ENCODE measurements at regions of chr21 and their contacts with region 1.

Region 1: GRCh38 chr21:15483138-15483780 is 246.5 kb upstream of the USP25 start:
- DNase-seq: peak; percentile 89
- H3K4me3 ChIP-seq: no peak overlapping the region
- H3K27ac ChIP-seq: no peak overlapping the region
- H3K4me1 ChIP-seq: no peaks in the 10 kb centered on the region
- H3K27me3 ChIP-seq: no peaks in the 10 kb centered on the region
- CTCF ChIP-seq: peak; percentile 88

Region 2: GRCh38 chr21:14414932-14415508 is 1068.2 kb before region 1 on chr21:
- intact Hi-C with region 1: loop called (anchors 10 kb)
- DNase-seq: no peak
- H3K4me3 ChIP-seq: no peak overlapping the region
- H3K27ac ChIP-seq: no peak overlapping the region
- H3K4me1 ChIP-seq: no peaks in the 10 kb centered on the region
- H3K27me3 ChIP-seq: no peaks in the 10 kb centered on the region
- CTCF ChIP-seq: no peak

Region 3: GRCh38 chr21:14864211-14865021 is 618.8 kb before region 1 on chr21:
- intact Hi-C with region 1: loop called (anchors 2 kb)
- DNase-seq: peak; percentile 79
- H3K4me3 ChIP-seq: no peak overlapping the region
- H3K27ac ChIP-seq: no peak overlapping the region
- H3K4me1 ChIP-seq: no peaks in the 10 kb centered on the region
- H3K27me3 ChIP-seq: no peaks in the 10 kb centered on the region
- CTCF ChIP-seq: peak; percentile 57

Region 4: GRCh38 chr21:15064576-15065391 is 418.5 kb before region 1 on chr21 and contains the start of gene NRIP1:
- intact Hi-C with region 1: loop called (anchors 10 kb)
- DNase-seq: peak; percentile 90
- H3K4me3 ChIP-seq: peak within 1 kb of the TSS; percentile 81
- H3K27ac ChIP-seq: peak within 1 kb of the TSS; percentile 97
- H3K4me1 ChIP-seq: peaks cover 4% of the 10 kb centered on the region
- H3K27me3 ChIP-seq: no peaks in the 10 kb centered on the region
- CTCF ChIP-seq: no peak
- total RNA-seq, gene NRIP1: 49.5 to 89.3 TPM

Region 5: DNA sequence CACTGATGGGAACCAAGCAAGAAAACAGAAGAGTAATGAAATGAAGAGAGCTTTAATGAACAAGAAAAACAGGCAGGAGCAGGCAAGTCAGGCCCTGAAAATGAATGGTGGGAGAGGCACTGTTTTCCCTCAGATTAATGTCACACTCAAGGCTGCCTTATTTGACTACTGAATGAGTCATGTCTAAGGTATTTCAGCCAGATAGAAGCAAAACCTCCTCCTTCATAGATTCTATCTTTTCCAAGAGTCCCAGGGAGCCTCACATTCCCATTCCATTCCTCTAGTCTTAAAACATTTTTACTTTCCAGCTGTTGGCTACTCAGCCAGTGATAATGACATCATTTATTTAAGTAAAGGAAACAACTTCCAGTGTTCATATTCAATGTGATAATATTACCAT is 190.0 kb before region 1 on chr21:
- intact Hi-C with region 1: loop called (anchors 5 kb)
- DNase-seq: no peak
- H3K4me3 ChIP-seq: no peak overlapping the region
- H3K27ac ChIP-seq: no peak overlapping the region
- H3K4me1 ChIP-seq: no peaks in the 10 kb centered on the region
- H3K27me3 ChIP-seq: no peaks in the 10 kb centered on the region
- CTCF ChIP-seq: no peak

Region 6: DNA sequence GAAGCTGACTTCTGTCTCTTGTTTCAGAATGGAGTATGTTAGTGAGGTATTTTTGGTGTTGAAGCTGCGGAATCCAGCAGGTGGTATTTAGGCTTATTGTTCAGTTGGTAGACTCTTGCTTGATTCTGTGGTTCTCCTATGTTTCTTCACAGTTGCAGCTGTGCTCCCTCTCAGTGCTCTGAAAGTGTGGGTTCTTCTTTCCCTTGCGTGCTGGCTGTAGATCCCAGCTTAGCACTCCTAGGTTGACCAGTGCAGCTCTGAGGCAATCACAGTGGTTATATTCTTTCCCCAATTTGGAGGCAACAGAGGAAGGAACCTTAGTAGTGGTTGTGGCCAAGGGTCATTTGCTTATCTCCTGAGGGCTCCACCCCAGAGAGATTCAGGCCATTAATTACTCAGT is 149.3 kb before region 1 on chr21:
- intact Hi-C with region 1: no loop called
- DNase-seq: no peak
- H3K4me3 ChIP-seq: no peak overlapping the region
- H3K27ac ChIP-seq: no peak overlapping the region
- H3K4me1 ChIP-seq: no peaks in the 10 kb centered on the region
- H3K27me3 ChIP-seq: no peaks in the 10 kb centered on the region
- CTCF ChIP-seq: no peak

Measured in colonic mucosa (tissue), 4 donors.